ENCODE measurements at regions of chr9 and their contacts with region 1.

Region 1: GRCh38 chr9:18208154-18209059 is 265.5 kb upstream of the ADAMTSL1 start:
- DNase-seq: peak; percentile 8 to 42
- ATAC-seq: peak; percentile 71 to 75; a peak in 5 of 6 replicates
- H3K4me3 ChIP-seq: no peak overlapping the region
- H3K27ac ChIP-seq: no peak overlapping the region
- H3K4me1 ChIP-seq: no peaks in the 10 kb centered on the region
- CTCF ChIP-seq: peak; percentile 37; the same call in 2 of the 3 replicates
- EP300 ChIP-seq: no peak
- POLR2A ChIP-seq: no peak
- RAD21 ChIP-seq: peak; percentile 37 to 50; a peak in 4 of 5 replicates

Region 2: DNA sequence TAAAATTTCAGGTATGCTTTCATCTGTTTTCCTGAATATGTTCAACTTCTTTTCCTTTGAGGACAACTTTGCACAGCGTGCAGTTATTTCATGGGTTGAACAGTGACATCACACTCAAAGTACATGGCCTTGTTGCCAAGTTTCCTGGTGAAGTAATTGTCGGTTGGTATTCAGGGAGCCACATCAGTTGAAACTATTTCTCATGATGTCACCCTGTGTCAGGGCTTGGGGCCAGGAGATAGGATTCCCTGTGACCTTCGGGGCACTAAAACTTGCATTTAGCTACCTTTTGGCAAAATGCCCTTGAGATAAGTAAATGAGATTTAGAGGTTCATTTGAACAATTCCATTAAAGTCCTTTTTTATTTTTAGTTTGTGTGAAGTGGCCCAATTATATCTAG is 245.7 kb before region 1 on chr9:
- CTCF ChIA-PET with region 1: no interaction called
- POLR2A ChIA-PET with region 1: no interaction called
- DNase-seq: no peak
- ATAC-seq: no peak
- H3K4me3 ChIP-seq: no peak overlapping the region
- H3K27ac ChIP-seq: no peak overlapping the region
- H3K4me1 ChIP-seq: no peaks in the 10 kb centered on the region
- CTCF ChIP-seq: no peak
- EP300 ChIP-seq: no peak
- POLR2A ChIP-seq: no peak
- RAD21 ChIP-seq: no peak

Region 3: DNA sequence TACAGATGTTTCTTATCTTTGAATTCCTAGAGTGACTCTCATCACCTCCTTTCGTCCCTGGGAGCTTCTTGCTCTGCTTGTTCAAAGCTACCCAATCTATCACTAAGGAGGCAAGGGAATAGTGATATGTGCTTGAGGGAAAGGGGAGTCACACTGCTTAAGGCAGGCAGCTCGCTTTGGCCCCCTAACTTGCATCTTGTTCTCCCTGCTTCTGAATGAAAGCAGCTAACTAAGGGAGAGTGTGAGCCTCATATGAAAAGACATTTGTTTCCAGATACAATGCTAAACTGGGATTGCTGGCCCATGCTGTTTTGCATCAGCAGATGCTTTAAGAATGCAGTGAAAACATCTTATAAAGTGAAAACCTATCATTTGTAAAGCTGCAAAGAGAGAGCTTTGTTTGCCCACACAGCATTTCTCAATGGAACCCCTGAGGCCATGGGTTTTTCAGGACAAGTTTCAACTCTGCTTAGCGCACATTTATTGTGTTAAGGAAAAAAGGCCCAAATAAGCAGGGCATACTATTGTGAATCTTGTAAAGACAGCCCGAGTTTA is 102.3 kb before region 1 on chr9:
- CTCF ChIA-PET with region 1: no interaction called
- POLR2A ChIA-PET with region 1: no interaction called
- DNase-seq: no peak
- ATAC-seq: no peak
- H3K4me3 ChIP-seq: no peak overlapping the region
- H3K27ac ChIP-seq: no peak overlapping the region
- H3K4me1 ChIP-seq: no peaks in the 10 kb centered on the region
- CTCF ChIP-seq: no peak
- EP300 ChIP-seq: no peak
- POLR2A ChIP-seq: no peak
- RAD21 ChIP-seq: no peak

Region 4: GRCh38 chr9:18122171-18122570 is 86.2 kb before region 1 on chr9:
- CTCF ChIA-PET with region 1: no interaction called
- POLR2A ChIA-PET with region 1: no interaction called
- DNase-seq: no peak
- ATAC-seq: no peak
- H3K4me3 ChIP-seq: no peak overlapping the region
- H3K27ac ChIP-seq: no peak overlapping the region
- H3K4me1 ChIP-seq: no peaks in the 10 kb centered on the region
- CTCF ChIP-seq: no peak
- EP300 ChIP-seq: no peak
- POLR2A ChIP-seq: no peak
- RAD21 ChIP-seq: no peak

Region 5: DNA sequence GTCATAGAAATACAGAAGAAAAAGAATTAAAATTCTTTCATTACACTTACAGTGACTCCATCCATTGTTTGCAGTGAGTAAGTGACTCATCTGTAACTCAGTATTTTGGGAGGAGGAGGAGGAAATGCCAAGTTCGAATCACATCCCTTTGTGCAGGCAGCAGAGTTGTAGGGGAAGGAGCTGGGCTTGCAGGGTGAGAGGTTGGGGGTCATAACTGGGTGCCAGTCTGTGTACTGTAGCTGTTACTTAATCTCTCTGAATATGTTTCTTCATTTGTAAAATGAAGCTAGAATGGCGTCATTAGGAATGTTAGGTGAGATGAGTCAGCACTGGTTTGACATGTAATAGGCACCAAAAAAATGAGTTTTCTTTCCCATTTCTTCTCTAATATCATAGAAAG is 29.8 kb after region 1 on chr9:
- CTCF ChIA-PET with region 1: interaction called, 10 read pairs
- POLR2A ChIA-PET with region 1: no interaction called
- DNase-seq: peak in 1 of 2 experiments; percentile 27
- ATAC-seq: peak; percentile 64 to 94; a peak in 5 of 6 replicates
- H3K4me3 ChIP-seq: no peak overlapping the region
- H3K27ac ChIP-seq: no peak overlapping the region
- H3K4me1 ChIP-seq: peaks cover 13% of the 10 kb centered on the region; the same call in 2 of the 3 replicates
- CTCF ChIP-seq: no peak
- EP300 ChIP-seq: no peak
- POLR2A ChIP-seq: no peak
- RAD21 ChIP-seq: no peak